HAP-1 (cell line): ENCODE measurements at regions of chr7 and their contacts with region 1.

Region 1: DNA sequence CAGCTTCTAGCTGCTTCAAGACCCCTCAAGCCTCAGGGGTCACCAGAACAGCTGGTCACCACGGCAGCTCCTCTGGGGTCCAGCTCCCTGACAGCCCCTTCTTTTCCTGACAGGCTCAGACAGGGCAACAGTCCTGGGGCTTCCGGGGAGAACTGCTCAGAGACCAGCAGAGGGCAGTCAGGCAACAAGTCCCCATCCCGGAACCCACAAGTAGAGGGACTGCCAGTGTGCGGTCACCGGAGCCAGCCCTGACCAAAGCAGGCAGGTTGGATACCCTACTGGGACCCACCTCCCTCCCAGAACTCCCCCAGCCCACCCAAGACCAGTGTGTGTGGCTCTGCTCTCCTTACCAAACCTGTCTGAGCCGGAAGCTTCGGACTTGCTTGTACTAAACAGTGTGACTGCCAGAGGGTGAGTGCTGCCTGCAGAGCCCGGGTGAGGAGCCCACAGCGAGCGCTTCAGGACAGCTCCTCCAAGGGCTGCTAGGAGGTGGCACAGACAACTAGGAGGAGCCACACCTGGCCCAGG is 40.3 kb downstream of the YKT6 start:
- DNase-seq: peak; percentile 64 to 83
- H3K4me3 ChIP-seq: no peak overlapping the region
- H3K4me1 ChIP-seq: no peaks in the 10 kb centered on the region
- H3K27me3 ChIP-seq: no peaks in the 10 kb centered on the region; the same call in 1 of the 2 replicates

Region 2: GRCh38 chr7:43914795-43915194 is 326.3 kb before region 1 on chr7:
- in situ Hi-C with region 1: no loop called
- DNase-seq: no peak
- H3K4me3 ChIP-seq: no peak overlapping the region
- H3K4me1 ChIP-seq: no peaks in the 10 kb centered on the region
- H3K27me3 ChIP-seq: no peaks in the 10 kb centered on the region

Region 3: DNA sequence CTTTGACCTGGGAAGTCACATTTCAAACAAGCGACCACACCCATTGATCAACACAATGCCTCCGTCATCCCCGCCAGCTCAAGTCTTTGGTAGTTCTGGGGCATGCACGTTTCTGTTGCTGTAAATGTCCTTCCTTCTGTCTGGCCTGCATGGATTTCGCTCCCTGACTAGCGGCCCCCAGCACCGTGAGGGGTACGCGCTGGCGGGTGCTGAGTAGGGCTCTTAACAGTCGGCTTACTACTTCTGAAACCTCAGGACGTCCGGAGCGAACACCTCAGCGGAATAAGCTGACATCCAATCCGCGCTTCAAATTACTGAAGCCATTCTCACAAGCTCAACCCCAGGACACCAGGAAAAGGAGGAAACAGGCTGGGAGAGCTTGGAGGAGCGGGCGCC is 248.9 kb after region 1 on chr7:
- in situ Hi-C with region 1: loop called (anchors 10 kb)
- DNase-seq: peak; percentile 29 to 34
- H3K4me3 ChIP-seq: peak overlapping the region; percentile 80
- H3K4me1 ChIP-seq: peaks cover 16% of the 10 kb centered on the region
- H3K27me3 ChIP-seq: no peaks in the 10 kb centered on the region